Mammary epithelial cell (primary cell): ENCODE measurements at regions of chr7 and their contacts with region 1.

Region 1: GRCh38 chr7:83486957-83487356 is 162.0 kb downstream of the SEMA3E start:
- DNase-seq: peak; percentile 44
- H3K4me3 ChIP-seq: no peak overlapping the region
- H3K27ac ChIP-seq: peak overlapping the region; percentile 22
- H3K4me1 ChIP-seq: peaks cover 28% of the 10 kb centered on the region
- H3K27me3 ChIP-seq: no peaks in the 10 kb centered on the region
- CTCF ChIP-seq: no peak

Region 2: GRCh38 chr7:82945480-82945879 is 541.5 kb before region 1 on chr7:
- CTCF ChIA-PET with region 1: no interaction called
- dilution Hi-C with region 1: no loop called
- in situ Hi-C with region 1: no loop called
- intact Hi-C with region 1: no loop called
- DNase-seq: peak; percentile 31
- H3K4me3 ChIP-seq: no peak overlapping the region
- H3K27ac ChIP-seq: no peak overlapping the region
- H3K4me1 ChIP-seq: no peaks in the 10 kb centered on the region
- H3K27me3 ChIP-seq: no peaks in the 10 kb centered on the region
- CTCF ChIP-seq: no peak

Region 3: DNA sequence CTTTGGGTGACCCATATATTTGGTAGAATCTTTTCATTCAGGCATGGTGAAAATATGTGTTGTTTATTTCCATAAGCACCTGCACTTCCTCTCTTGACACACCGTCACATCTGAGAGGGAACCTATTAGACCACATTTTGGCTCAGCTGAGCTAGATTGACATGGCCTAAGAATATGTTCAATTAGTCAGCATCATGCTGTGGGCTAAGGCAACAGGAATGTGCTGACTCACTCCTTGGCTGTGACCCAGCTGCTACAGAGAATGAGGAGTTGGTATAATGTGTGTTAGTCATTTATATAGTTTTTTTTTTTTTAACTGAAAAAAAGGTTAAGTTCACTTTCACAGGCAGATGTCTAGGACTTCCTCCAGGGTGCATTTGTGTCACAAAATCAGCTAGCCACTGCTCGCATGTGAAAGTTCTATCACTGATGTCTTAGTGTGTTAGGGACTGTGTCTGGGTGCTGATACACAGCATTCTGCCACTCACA is 18.7 kb before region 1 on chr7:
- CTCF ChIA-PET with region 1: no interaction called
- dilution Hi-C with region 1: no loop called
- in situ Hi-C with region 1: no loop called
- intact Hi-C with region 1: loop called (anchors 1 kb)
- DNase-seq: peak; percentile 98
- H3K4me3 ChIP-seq: peak overlapping the region in 2 of 3 experiments; percentile 11 to 14
- H3K27ac ChIP-seq: peak overlapping the region; percentile 66
- H3K4me1 ChIP-seq: peaks cover 16% of the 10 kb centered on the region
- H3K27me3 ChIP-seq: no peaks in the 10 kb centered on the region
- CTCF ChIP-seq: peak in 1 of 2 donors; percentile 22